SK-N-SH (cell line): ENCODE measurements at regions of chr3 and their contacts with region 1.

Region 1: GRCh38 chr3:85360742-85361387 is 402.1 kb downstream of the CADM2 start:
- DNase-seq: peak; percentile 44
- H3K4me3 ChIP-seq: no peak overlapping the region
- H3K27ac ChIP-seq: no peak overlapping the region
- H3K4me1 ChIP-seq: no peaks in the 10 kb centered on the region
- H3K27me3 ChIP-seq: no peaks in the 10 kb centered on the region
- CTCF ChIP-seq: peak; percentile 64
- EP300 ChIP-seq: no peak
- RAD21 ChIP-seq: peak; percentile 88

Region 2: GRCh38 chr3:85377115-85377514 is 16.2 kb after region 1 on chr3:
- CTCF ChIA-PET with region 1: interaction called, 11 read pairs
- POLR2A ChIA-PET with region 1: no interaction called
- DNase-seq: no peak
- H3K4me3 ChIP-seq: no peak overlapping the region
- H3K27ac ChIP-seq: no peak overlapping the region
- H3K4me1 ChIP-seq: no peaks in the 10 kb centered on the region
- H3K27me3 ChIP-seq: no peaks in the 10 kb centered on the region
- CTCF ChIP-seq: no peak
- EP300 ChIP-seq: no peak
- RAD21 ChIP-seq: no peak